WTC11 (cell line): ENCODE measurements at regions of chr17 and their contacts with region 1.

Region 1: GRCh38 chr17:47949136-47949759 is 7.9 kb downstream of the PNPO start:
- DNase-seq: peak; percentile 98
- ATAC-seq: peak; percentile 88
- H3K4me3 Mint-ChIP-seq: peak overlapping the region; percentile 47
- H3K27ac Mint-ChIP-seq: peak overlapping the region; percentile 83
- H3K4me1 Mint-ChIP-seq: peaks cover 16% of the 10 kb centered on the region
- H3K27me3 Mint-ChIP-seq: no peaks in the 10 kb centered on the region
- CTCF ChIP-seq: peak; percentile 72

Region 2: DNA sequence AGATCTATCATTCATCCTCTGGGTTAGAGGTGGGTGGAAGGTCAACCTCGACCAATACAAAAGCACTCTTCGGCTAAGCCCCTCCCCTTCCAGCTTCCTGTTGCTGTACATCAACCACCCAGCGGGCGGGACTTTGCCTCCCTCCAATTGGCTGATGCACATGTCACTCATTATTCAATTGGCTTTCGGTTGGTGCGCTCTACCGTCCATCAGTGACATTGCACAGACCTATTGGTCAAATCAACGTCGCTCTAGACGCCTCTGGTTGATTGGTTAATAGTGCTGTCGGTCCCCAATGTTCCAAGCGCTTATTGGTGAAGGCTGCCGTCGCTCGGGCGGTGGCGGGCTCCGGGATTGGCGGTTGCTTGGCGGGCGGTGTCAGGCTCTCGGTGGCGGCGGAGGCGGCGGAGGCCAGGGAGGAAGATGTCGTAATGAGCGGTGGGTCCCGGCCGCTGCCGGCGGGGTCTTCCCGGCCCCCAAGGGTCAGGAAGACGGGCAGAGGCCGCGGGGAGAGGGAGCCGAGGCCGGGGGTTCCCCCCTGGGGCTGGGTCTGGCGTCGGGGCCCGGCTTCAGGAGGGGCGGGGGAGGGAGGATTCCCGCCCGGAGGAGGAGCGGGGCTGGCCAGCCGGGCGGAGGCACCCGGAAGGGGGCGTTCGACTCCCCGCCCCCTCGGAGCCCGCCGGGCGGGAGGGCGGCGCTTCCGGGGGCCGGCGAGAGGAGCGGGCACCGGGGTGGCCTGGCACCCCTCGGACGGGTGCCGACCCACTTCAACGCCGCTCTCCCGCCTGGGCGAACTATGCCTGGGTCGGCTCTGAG is 53.2 kb before region 1 on chr17 and contains the start of gene SP2:
- CTCF ChIA-PET with region 1: interaction called, 27 read pairs
- POLR2A ChIA-PET with region 1: no interaction called
- DNase-seq: peak; percentile 99
- ATAC-seq: peak; percentile 95
- H3K4me3 Mint-ChIP-seq: peak within 1 kb of the TSS; percentile 97
- H3K27ac Mint-ChIP-seq: peak within 1 kb of the TSS; percentile 96
- H3K4me1 Mint-ChIP-seq: peaks cover 37% of the 10 kb centered on the region
- H3K27me3 Mint-ChIP-seq: no peaks in the 10 kb centered on the region
- CTCF ChIP-seq: no peak
- total RNA-seq, gene SP2: 9.9 to 11.5 TPM (median 10.7 TPM) in 3 replicates

Region 3: DNA sequence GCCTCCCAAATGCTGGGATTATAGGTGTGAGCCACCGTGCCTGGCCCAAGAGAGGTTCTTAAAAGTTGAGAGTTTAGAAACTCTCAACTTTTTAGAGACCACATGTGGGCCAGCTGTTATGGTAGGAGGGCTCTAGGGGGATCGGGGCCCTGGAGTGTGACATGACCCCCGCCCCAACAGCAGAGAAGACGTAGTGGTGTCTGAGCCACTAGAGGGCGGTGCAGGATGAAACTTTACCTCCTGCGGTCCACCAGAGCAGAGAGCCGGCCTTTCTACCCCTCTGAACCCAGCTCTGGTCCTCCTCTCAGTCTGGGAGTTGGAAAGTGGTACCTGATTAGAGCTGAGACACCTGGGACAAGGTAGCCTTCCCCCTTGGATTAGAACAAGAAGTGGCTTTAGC is 29.1 kb after region 1 on chr17:
- CTCF ChIA-PET with region 1: interaction called, 12 read pairs
- POLR2A ChIA-PET with region 1: interaction called, 3 read pairs
- DNase-seq: peak; percentile 87
- ATAC-seq: peak; percentile 94
- H3K4me3 Mint-ChIP-seq: no peak overlapping the region
- H3K27ac Mint-ChIP-seq: no peak overlapping the region
- H3K4me1 Mint-ChIP-seq: no peaks in the 10 kb centered on the region
- H3K27me3 Mint-ChIP-seq: no peaks in the 10 kb centered on the region
- CTCF ChIP-seq: peak; percentile 78; the same call in 1 of the 2 replicates

Region 4: DNA sequence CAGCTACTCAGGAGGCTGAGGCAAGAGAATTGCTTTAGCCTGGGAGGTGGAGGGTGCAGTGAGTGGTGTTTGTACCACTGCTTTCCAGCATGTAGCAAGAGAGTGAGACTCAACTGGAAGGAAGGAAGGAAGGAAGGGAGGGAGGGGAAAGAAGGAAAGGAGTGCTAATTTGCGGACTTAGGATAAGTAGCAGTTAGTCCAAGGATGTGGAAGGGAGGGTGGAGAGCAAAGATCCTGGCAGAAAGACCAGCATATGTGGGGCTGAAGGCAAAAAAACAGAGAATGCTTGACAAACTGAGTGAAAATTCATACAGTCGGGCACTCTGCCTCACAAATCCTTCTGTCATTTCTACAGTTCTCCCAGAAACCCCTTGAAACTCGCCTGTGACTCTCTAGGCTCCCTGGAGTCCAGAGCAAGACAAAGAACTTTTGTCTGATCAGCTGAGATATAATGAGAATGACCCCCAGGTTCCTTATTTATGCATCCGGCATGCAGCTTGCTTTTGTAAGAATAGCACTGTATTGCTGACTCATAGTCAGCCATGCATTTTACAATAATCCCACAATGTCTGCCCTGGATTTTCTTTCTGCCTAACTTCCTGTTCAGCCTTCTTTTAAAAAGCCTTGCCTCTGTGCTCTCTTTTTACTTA is 53.1 kb after region 1 on chr17:
- CTCF ChIA-PET with region 1: interaction called, 12 read pairs
- POLR2A ChIA-PET with region 1: no interaction called
- DNase-seq: no peak
- ATAC-seq: no peak
- H3K4me3 Mint-ChIP-seq: peak overlapping the region; percentile 21
- H3K27ac Mint-ChIP-seq: peak overlapping the region; percentile 75
- H3K4me1 Mint-ChIP-seq: peaks cover 52% of the 10 kb centered on the region
- H3K27me3 Mint-ChIP-seq: no peaks in the 10 kb centered on the region; the same call in 1 of the 2 replicates
- CTCF ChIP-seq: no peak

Region 5: GRCh38 chr17:48107168-48108132 is 158.2 kb after region 1 on chr17 and contains the start of gene SNX11:
- CTCF ChIA-PET with region 1: no interaction called
- POLR2A ChIA-PET with region 1: no interaction called
- DNase-seq: peak; percentile 97
- ATAC-seq: peak; percentile 96
- H3K4me3 Mint-ChIP-seq: peak within 1 kb of the TSS; percentile 89
- H3K27ac Mint-ChIP-seq: peak within 1 kb of the TSS; percentile 83
- H3K4me1 Mint-ChIP-seq: peaks cover 11% of the 10 kb centered on the region
- H3K27me3 Mint-ChIP-seq: peaks cover 8% of the 10 kb centered on the region; the same call in 1 of the 2 replicates
- CTCF ChIP-seq: no peak
- total RNA-seq, gene SNX11: 19.3 to 24.5 TPM (median 20.1 TPM) in 3 replicates